ENCODE measurements at regions of chr1 and their contacts with region 1.

Region 1: GRCh38 chr1:67685067-67685557 is at the start of gene GADD45A:
- DNase-seq: peak; percentile 95
- H3K4me3 ChIP-seq: peak within 1 kb of the TSS; percentile 87 to 98
- H3K27ac ChIP-seq: peak within 1 kb of the TSS; percentile 96 to 99
- H3K4me1 ChIP-seq: peaks cover 15 to 28% of the 10 kb centered on the region in 2 experiments; a peak in 3 of 4 replicates
- H3K27me3 ChIP-seq: no peaks in the 10 kb centered on the region
- CTCF ChIP-seq: no peak
- EP300 ChIP-seq: no peak; a peak in 1 of 4 replicates
- RAD21 ChIP-seq: no peak
- polyA plus RNA-seq, gene GADD45A: 106 and 164 TPM in 2 replicates

Region 2: GRCh38 chr1:67626495-67627235 is 58.4 kb before region 1 on chr1:
- CTCF ChIA-PET with region 1: no interaction called
- POLR2A ChIA-PET with region 1: no interaction called
- DNase-seq: no peak
- H3K4me3 ChIP-seq: no peak overlapping the region
- H3K27ac ChIP-seq: no peak overlapping the region
- H3K4me1 ChIP-seq: peaks cover 0 to 21% of the 10 kb centered on the region in 2 experiments; a peak in 2 of 4 replicates
- H3K27me3 ChIP-seq: no peaks in the 10 kb centered on the region
- CTCF ChIP-seq: no peak
- EP300 ChIP-seq: no peak
- RAD21 ChIP-seq: no peak

Region 3: GRCh38 chr1:67646145-67647035 is 38.7 kb before region 1 on chr1:
- CTCF ChIA-PET with region 1: interaction called, 3 read pairs
- POLR2A ChIA-PET with region 1: interaction called, 12 read pairs
- DNase-seq: peak; percentile 61
- H3K4me3 ChIP-seq: 0 out of 4 replicates have a peak overlapping the region, but pooled peaks of 1 of the 2 experiments have one; percentile 5
- H3K27ac ChIP-seq: peak overlapping the region; percentile 56 to 97
- H3K4me1 ChIP-seq: peaks cover 18 to 39% of the 10 kb centered on the region in 2 experiments
- H3K27me3 ChIP-seq: no peaks in the 10 kb centered on the region
- CTCF ChIP-seq: no peak
- EP300 ChIP-seq: peak; percentile 16 to 95; a peak in 3 of 4 replicates
- RAD21 ChIP-seq: peak; percentile 36; the same call in 1 of the 2 replicates

Region 4: GRCh38 chr1:67674260-67675011 is 10.7 kb before region 1 on chr1:
- CTCF ChIA-PET with region 1: interaction called, 6 read pairs
- POLR2A ChIA-PET with region 1: interaction called, 25 read pairs
- DNase-seq: peak; percentile 75
- H3K4me3 ChIP-seq: no peak overlapping the region; a peak in 1 of 4 replicates
- H3K27ac ChIP-seq: peak overlapping the region; percentile 38 to 81; a peak in 3 of 4 replicates
- H3K4me1 ChIP-seq: peaks cover 13 to 16% of the 10 kb centered on the region in 2 experiments; a peak in 3 of 4 replicates
- H3K27me3 ChIP-seq: no peaks in the 10 kb centered on the region
- CTCF ChIP-seq: no peak
- EP300 ChIP-seq: peak; percentile 9 to 73; a peak in 2 of 4 replicates
- RAD21 ChIP-seq: no peak

Region 5: DNA sequence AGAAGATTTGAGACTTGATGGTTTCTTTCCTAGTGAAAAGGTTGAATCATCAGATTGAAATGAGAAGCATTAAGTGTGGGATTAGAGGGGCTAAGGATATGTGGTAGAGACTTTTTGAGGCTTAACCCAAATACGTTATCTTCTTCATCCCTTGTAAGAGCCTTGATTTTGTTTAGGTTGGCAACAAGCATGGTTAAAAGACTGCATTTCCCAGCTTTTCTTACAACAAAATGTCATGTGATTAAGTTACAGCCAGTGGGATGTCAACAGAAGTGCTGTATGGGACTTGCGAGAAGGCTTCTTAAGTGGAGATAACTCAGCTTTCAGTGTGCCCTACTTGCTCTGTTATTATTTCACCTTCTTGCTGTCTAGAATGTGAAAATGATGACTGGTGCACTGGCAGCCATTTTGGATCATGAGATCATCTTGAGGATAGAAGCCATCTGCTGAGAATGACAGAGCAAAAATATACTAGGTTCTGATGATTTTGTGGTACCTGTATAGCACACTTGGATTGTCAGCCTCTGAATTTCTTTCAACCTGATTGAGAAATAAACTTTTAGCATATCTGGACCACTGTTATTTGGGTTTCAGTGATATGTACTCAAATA is 189.5 kb after region 1 on chr1:
- CTCF ChIA-PET with region 1: no interaction called
- POLR2A ChIA-PET with region 1: no interaction called
- DNase-seq: no peak
- H3K4me3 ChIP-seq: no peak overlapping the region
- H3K27ac ChIP-seq: no peak overlapping the region
- H3K4me1 ChIP-seq: no peaks in the 10 kb centered on the region
- H3K27me3 ChIP-seq: no peaks in the 10 kb centered on the region
- CTCF ChIP-seq: no peak
- EP300 ChIP-seq: no peak
- RAD21 ChIP-seq: no peak

Region 6: GRCh38 chr1:67945733-67946374 is 260.7 kb after region 1 on chr1:
- CTCF ChIA-PET with region 1: no interaction called
- POLR2A ChIA-PET with region 1: no interaction called
- DNase-seq: peak; percentile 77
- H3K4me3 ChIP-seq: no peak overlapping the region
- H3K27ac ChIP-seq: peak overlapping the region; percentile 14 to 93; a peak in 3 of 4 replicates
- H3K4me1 ChIP-seq: peaks cover 14 to 27% of the 10 kb centered on the region in 2 experiments
- H3K27me3 ChIP-seq: no peaks in the 10 kb centered on the region
- CTCF ChIP-seq: no peak
- EP300 ChIP-seq: no peak
- RAD21 ChIP-seq: peak; percentile 27; the same call in 1 of the 2 replicates

Region 7: DNA sequence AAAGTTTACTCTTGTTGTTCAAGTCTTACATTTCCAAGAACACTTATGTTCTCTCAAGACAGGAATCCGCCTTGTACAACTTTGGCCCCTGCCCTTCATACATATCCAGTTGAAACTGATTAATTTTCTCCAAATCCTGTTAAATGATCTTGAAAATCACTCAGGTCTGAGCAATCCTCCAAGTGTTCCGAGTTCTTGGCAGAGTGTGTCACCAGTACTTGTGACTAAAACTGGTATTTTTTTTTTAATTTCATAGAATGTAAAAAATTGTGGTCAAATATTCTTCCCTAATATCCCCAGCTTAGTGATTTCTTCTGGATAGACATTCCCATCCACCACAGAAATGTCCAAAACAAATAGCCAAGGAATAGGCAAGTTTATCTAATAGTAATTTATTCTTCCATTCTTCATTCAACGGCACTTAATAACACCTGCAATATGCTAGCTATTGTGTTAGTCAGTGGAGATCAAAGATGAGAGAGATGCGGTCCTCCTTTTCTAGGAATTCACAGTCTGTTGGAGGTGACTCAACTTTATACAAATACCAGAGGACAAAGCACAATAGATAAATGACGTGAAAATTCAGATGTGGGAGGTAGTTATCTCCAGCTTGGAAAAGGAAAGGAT is 293.9 kb after region 1 on chr1:
- CTCF ChIA-PET with region 1: no interaction called
- POLR2A ChIA-PET with region 1: no interaction called
- DNase-seq: no peak
- H3K4me3 ChIP-seq: no peak overlapping the region
- H3K27ac ChIP-seq: peak overlapping the region in 1 of 2 experiments; percentile 93; a peak in 2 of 4 replicates
- H3K4me1 ChIP-seq: peaks cover 0 to 9% of the 10 kb centered on the region in 2 experiments; a peak in 2 of 4 replicates
- H3K27me3 ChIP-seq: no peaks in the 10 kb centered on the region
- CTCF ChIP-seq: no peak
- EP300 ChIP-seq: peak in 1 of 2 experiments; percentile 94; a peak in 2 of 4 replicates
- RAD21 ChIP-seq: no peak

Measured in SK-N-SH (cell line).